Heart left ventricle (tissue), 16 donors: ENCODE measurements at regions of chrX and their contacts with region 1.

Region 1: GRCh38 chrX:29359276-29359675 is 772.0 kb downstream of the IL1RAPL1 start:
- DNase-seq: no peak
- ATAC-seq: peak in 1 of 4 donors; percentile 26
- H3K4me3 ChIP-seq: no peak overlapping the region
- H3K27ac ChIP-seq: no peak overlapping the region
- H3K4me1 ChIP-seq: no peaks in the 10 kb centered on the region
- H3K27me3 ChIP-seq: no peaks in the 10 kb centered on the region
- CTCF ChIP-seq: no peak
- POLR2A ChIP-seq: no peak

Region 2: DNA sequence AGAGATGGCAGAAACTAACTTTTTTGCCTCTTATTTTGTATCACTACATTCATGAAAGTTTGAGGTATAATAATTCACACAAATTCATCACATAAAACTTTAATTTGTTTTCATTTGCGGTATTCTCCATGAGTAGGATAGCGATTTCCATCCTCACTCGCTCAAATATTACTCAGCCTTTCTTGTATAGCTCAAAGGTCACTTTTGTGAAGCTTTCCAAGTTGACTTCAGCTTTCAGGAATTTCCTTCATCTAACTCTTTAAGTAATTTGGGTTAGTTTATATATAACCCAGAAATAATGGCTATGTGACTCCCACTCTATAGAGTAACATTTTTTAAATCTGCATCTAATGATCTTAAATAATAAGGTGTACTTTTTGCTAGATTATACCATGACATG is 457.6 kb before region 1 on chrX:
- intact Hi-C with region 1: no loop called
- DNase-seq: no peak
- ATAC-seq: no peak
- H3K4me3 ChIP-seq: no peak overlapping the region
- H3K27ac ChIP-seq: no peak overlapping the region
- H3K4me1 ChIP-seq: no peaks in the 10 kb centered on the region
- H3K27me3 ChIP-seq: no peaks in the 10 kb centered on the region
- CTCF ChIP-seq: no peak
- POLR2A ChIP-seq: no peak

Region 3: GRCh38 chrX:29308726-29309125 is 50.5 kb before region 1 on chrX:
- intact Hi-C with region 1: no loop called
- DNase-seq: no peak
- ATAC-seq: no peak
- H3K4me3 ChIP-seq: no peak overlapping the region
- H3K27ac ChIP-seq: no peak overlapping the region
- H3K4me1 ChIP-seq: no peaks in the 10 kb centered on the region
- H3K27me3 ChIP-seq: no peaks in the 10 kb centered on the region
- CTCF ChIP-seq: no peak
- POLR2A ChIP-seq: no peak

Region 4: DNA sequence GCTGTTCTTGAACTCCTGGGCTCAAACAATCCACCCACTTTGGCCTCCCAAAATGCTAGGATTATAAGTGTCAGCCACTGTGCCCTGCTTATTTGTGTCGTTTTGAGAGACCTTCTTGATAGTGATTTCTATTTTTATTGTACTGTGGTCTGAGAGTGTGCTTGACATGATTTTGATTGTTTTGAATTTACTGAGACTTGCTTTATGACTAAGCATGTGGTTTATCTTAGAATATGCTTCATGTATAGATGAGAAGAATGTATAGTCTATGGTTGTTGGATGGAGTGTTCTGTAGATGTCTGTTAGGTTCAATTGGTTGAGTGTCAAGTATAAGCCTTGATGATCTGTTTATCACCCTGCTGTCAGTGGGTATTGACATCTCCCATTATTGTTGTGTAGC is 17.3 kb after region 1 on chrX:
- intact Hi-C with region 1: loop called in 1 of 10 experiments (anchors 1 kb)
- DNase-seq: no peak
- ATAC-seq: no peak
- H3K4me3 ChIP-seq: no peak overlapping the region
- H3K27ac ChIP-seq: no peak overlapping the region
- H3K4me1 ChIP-seq: no peaks in the 10 kb centered on the region
- H3K27me3 ChIP-seq: no peaks in the 10 kb centered on the region
- CTCF ChIP-seq: no peak
- POLR2A ChIP-seq: no peak

Region 5: GRCh38 chrX:29453333-29453732 is 94.1 kb after region 1 on chrX:
- intact Hi-C with region 1: no loop called
- DNase-seq: no peak
- ATAC-seq: no peak
- H3K4me3 ChIP-seq: no peak overlapping the region
- H3K27ac ChIP-seq: no peak overlapping the region
- H3K4me1 ChIP-seq: no peaks in the 10 kb centered on the region
- H3K27me3 ChIP-seq: no peaks in the 10 kb centered on the region
- CTCF ChIP-seq: no peak
- POLR2A ChIP-seq: no peak